ENCODE measurements at regions of chr6 and their contacts with region 1.

Region 1: DNA sequence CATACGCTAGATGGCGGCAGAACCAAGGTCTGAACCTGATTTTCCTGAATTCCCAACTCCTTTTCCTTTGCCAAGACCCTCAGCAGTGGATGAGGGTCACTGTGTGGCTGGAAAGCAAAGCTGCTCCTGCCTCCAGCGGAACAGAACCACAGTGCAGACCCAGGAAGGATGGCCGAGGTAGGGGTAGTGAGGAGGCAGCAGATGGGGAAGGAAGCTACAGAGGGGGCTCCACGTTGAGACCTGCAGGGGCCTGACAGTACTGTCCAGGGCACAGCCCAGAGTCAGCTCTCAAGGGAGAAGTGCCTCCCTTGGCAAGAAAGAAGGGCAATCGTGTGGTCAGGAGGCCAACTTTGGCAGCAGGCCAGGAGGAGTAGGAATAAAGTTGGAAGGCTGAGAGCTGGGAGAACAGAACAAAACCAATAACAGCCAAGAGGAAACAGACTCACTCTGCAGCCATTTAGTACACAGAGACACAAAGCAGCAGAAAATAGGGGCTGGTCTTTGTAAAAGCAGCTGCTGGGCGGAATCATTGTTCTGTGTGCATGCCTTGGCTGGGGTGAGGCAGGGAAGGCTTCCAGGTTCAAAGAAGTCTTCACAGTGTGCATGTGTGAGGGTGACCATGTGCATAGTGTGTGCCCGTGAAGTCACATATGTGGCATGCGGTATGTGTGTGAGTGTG is 3.1 kb downstream of the GABRR2 start:
- DNase-seq: peak in 3 of 4 donors; percentile 67 to 83 (median 79)
- ATAC-seq: peak; percentile 83
- H3K4me3 ChIP-seq: no peak overlapping the region
- H3K27ac ChIP-seq: peak overlapping the region; percentile 34 to 39
- H3K4me1 ChIP-seq: peaks cover 15 to 40% of the 10 kb centered on the region in 2 donors
- H3K27me3 ChIP-seq: no peaks in the 10 kb centered on the region
- CTCF ChIP-seq: peak; percentile 20

Region 2: GRCh38 chr6:89239338-89239737 is 72.7 kb before region 1 on chr6:
- intact Hi-C with region 1: no loop called
- DNase-seq: no peak
- ATAC-seq: no peak
- H3K4me3 ChIP-seq: no peak overlapping the region
- H3K27ac ChIP-seq: no peak overlapping the region
- H3K4me1 ChIP-seq: no peaks in the 10 kb centered on the region
- H3K27me3 ChIP-seq: no peaks in the 10 kb centered on the region
- CTCF ChIP-seq: no peak

Region 3: DNA sequence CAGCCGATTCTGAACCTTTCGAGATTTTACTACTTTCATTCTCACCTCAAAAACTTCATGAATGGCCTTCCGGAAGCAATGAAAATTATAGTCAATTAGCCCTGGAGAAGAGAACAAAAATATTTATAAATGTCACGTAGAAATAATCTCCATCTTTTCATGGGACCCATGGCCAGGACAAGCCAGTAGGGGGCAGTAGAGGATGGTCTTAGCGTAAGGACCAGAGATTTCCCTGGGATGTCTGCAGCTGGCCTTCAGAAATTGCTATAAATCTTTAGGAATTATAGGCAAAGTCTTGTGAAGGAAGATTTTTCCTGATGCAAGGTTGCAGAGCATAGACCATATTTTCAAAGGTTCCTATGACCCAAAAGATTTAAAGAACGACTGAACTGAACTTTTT is 56.1 kb after region 1 on chr6:
- intact Hi-C with region 1: loop called in 1 of 2 experiments (anchors 10 kb)
- DNase-seq: peak in 1 of 4 donors; percentile 62
- ATAC-seq: peak; percentile 70
- H3K4me3 ChIP-seq: no peak overlapping the region
- H3K27ac ChIP-seq: no peak overlapping the region
- H3K4me1 ChIP-seq: peaks cover 0 to 21% of the 10 kb centered on the region in 2 donors
- H3K27me3 ChIP-seq: no peaks in the 10 kb centered on the region
- CTCF ChIP-seq: peak; percentile 82 to 84

Measured in left lung (tissue), 14 donors.